Activated T-helper 1 cell treated with anti-CD3 and anti-CD28 coated beads, Interleukin-12 subunit alpha, Interleukin-12 subunit beta, Interleukin-2, Interleukin-4 antibody, amounts not matched to agents 30 ng/mL and 10 ng/mL and 1 ng/mL, durations not matched to agents 14 hours and 24 hours and 36 hours (primary cell): ENCODE measurements at regions of chr6 and their contacts with region 1.

Region 1: DNA sequence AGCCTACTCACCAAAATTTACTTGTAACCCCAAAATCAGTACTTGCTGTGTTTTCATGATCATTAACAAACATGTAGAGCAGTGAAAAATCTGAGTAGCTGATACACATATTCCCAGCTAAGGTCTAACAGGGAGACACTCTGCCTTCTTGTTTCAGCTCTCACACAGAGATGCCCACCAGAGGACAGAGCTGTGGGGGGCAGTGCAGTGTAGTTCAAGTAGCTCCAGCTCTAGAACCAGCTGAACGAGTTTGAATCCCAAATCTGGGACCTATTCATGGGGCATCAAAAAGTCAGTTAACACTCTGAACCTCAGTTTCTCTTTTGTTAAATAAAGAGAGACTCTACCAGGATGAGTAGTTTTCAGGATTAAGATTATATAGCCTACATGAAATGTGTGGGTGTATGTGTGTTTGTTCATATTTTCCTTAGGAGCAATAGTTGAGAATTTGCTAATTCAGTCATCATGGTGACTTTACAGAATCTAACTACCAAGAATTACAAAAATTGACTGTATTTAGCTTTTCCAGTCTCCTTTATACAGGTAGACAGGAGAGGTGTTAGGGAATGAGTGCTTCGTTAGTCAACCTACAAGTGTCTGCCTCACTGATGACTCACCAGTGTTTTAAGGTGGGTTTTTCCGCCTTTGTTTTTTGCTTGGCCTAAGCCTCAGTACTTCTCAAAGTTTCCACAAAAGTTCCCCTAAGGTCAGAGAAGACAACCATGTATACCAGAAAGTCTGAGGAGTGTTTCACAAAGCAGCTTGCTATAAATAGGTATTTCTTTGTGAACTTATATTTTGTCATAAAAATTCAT is 164.0 kb upstream of the RUNX2 start:
- DNase-seq: peak; percentile 31
- H3K4me3 Mint-ChIP-seq: peak overlapping the region; percentile 35
- H3K27ac Mint-ChIP-seq: peak overlapping the region; percentile 89
- H3K4me1 Mint-ChIP-seq: peaks cover 62% of the 10 kb centered on the region
- H3K27me3 Mint-ChIP-seq: no peaks in the 10 kb centered on the region

Region 2: GRCh38 chr6:44704240-44705150 is 459.7 kb before region 1 on chr6:
- intact Hi-C with region 1: no loop called
- DNase-seq: peak; percentile 14
- H3K4me3 Mint-ChIP-seq: peak overlapping the region; percentile 13
- H3K27ac Mint-ChIP-seq: peak overlapping the region; percentile 69
- H3K4me1 Mint-ChIP-seq: peaks cover 27% of the 10 kb centered on the region
- H3K27me3 Mint-ChIP-seq: no peaks in the 10 kb centered on the region

Region 3: DNA sequence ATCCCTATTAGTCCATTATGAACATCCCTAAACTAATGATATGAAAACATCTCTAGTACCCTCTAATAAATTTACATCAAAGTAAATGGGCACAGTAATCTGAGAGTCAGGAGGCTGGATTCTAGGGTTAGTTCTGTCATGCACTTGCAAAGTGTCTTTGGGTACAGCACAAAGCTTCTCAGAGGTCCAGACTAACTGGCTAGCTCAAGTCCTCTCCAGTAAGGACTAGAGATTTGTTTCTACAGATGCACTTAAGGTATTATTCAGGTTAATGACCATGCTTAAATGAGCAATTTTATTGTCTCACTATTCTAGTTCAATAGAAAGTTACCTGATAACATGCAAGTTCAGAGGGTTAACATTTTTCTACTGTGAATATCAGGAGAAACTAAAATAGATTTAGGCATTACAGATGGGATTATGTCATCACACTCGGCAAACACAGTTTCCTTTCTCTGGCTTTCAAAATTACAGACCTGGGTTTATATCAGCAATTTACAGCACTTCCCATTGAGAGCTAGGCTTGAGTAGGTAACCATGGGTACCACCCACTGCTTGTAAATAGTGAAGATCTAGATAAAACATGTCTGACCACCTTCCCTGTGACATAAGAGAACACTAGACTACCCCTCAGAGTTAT is 238.9 kb before region 1 on chr6:
- intact Hi-C with region 1: loop called (anchors 2 kb)
- DNase-seq: peak; percentile 18
- H3K4me3 Mint-ChIP-seq: peak overlapping the region; percentile 16
- H3K27ac Mint-ChIP-seq: peak overlapping the region; percentile 67
- H3K4me1 Mint-ChIP-seq: peaks cover 47% of the 10 kb centered on the region
- H3K27me3 Mint-ChIP-seq: no peaks in the 10 kb centered on the region

Region 4: GRCh38 chr6:45009576-45009975 is 154.6 kb before region 1 on chr6:
- intact Hi-C with region 1: loop called (anchors 1 kb)
- DNase-seq: no peak
- H3K4me3 Mint-ChIP-seq: no peak overlapping the region
- H3K27ac Mint-ChIP-seq: peak overlapping the region; percentile 67
- H3K4me1 Mint-ChIP-seq: peaks cover 30% of the 10 kb centered on the region
- H3K27me3 Mint-ChIP-seq: no peaks in the 10 kb centered on the region

Region 5: GRCh38 chr6:45185403-45186251 is 21.5 kb after region 1 on chr6:
- intact Hi-C with region 1: loop called (anchors 1 kb)
- DNase-seq: no peak
- H3K4me3 Mint-ChIP-seq: no peak overlapping the region
- H3K27ac Mint-ChIP-seq: peak overlapping the region; percentile 46
- H3K4me1 Mint-ChIP-seq: peaks cover 36% of the 10 kb centered on the region
- H3K27me3 Mint-ChIP-seq: no peaks in the 10 kb centered on the region

Region 6: GRCh38 chr6:45310118-45310788 is 146.1 kb after region 1 on chr6:
- intact Hi-C with region 1: loop called (anchors 5 kb)
- DNase-seq: peak; percentile 19
- H3K4me3 Mint-ChIP-seq: peak overlapping the region; percentile 45
- H3K27ac Mint-ChIP-seq: peak overlapping the region; percentile 60
- H3K4me1 Mint-ChIP-seq: peaks cover 42% of the 10 kb centered on the region
- H3K27me3 Mint-ChIP-seq: no peaks in the 10 kb centered on the region

Region 7: DNA sequence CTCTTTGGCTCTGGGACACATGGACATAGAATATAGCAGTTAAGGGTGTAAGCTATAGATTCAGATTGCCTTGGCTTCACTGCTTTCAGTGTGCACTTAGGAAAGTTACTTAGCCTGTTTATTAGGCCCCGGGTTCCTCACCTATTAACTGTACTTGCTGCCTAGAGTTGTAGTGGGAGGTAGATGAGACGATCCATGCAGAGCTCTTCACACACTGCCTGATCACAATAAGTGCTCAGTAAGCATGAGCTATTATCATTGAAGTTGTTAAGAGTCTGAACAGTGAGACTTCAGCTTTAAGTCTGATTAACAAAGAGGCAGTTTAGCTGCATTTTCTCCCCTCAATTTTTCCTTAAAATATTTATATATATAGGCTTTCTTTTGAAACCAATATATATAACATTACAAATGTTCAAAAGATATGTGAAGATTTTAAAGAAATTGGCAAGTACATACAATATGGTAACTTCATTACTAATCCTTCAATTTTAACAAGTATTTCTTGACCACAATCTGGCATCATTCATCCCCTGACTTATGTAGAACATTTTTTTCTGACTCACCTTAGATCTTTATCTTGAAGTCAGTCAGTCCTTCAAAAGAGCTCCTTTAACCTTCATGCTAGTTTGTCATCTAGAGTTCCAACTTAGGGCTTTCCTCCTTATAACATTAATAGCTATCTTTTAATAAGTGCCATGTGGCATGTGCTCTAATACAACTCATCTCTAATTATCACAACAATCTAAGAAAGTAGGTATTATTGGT is 234.1 kb after region 1 on chr6:
- intact Hi-C with region 1: no loop called
- DNase-seq: no peak
- H3K4me3 Mint-ChIP-seq: no peak overlapping the region
- H3K27ac Mint-ChIP-seq: no peak overlapping the region
- H3K4me1 Mint-ChIP-seq: peaks cover 5% of the 10 kb centered on the region
- H3K27me3 Mint-ChIP-seq: peaks cover 10% of the 10 kb centered on the region

Region 8: DNA sequence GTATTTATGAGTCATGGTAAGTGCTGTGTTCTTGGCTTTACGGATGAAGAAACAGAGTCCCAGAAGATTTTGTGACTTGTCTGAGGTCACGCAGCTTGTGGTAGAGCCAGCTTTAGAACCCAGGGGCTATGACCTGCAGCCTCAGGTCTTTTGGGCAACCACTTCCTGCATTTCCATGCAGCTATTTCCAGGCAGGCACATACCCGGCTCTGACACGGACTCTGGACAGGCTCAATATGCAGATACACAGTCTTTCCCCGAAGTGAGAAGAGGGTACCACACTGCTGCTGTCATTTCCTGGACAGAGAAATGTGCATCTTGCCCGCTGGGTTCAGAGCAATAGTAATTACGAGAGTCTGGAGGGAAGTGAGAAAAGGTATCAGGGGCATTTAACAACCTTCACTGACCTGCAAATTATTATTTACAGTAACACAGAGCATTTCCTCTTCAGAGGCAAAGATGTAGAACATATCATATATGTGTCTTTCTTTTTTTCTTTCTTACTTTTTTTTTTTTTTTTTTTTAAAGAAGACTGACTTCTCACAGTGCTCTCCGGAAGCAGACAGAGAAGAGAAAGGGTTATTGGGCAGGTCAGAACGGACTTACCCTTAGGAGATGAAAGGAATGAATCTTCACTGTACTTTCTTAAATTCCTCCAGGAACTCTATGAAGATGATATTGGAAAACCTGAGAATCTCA is 666.4 kb after region 1 on chr6:
- intact Hi-C with region 1: loop called (anchors 10 kb)
- DNase-seq: peak; percentile 44
- H3K4me3 Mint-ChIP-seq: peak overlapping the region; percentile 70
- H3K27ac Mint-ChIP-seq: peak overlapping the region; percentile 85
- H3K4me1 Mint-ChIP-seq: peaks cover 47% of the 10 kb centered on the region
- H3K27me3 Mint-ChIP-seq: no peaks in the 10 kb centered on the region